Endothelial cell of umbilical vein (primary cell): ENCODE measurements at regions of chr12 and their contacts with region 1.

Region 1: DNA sequence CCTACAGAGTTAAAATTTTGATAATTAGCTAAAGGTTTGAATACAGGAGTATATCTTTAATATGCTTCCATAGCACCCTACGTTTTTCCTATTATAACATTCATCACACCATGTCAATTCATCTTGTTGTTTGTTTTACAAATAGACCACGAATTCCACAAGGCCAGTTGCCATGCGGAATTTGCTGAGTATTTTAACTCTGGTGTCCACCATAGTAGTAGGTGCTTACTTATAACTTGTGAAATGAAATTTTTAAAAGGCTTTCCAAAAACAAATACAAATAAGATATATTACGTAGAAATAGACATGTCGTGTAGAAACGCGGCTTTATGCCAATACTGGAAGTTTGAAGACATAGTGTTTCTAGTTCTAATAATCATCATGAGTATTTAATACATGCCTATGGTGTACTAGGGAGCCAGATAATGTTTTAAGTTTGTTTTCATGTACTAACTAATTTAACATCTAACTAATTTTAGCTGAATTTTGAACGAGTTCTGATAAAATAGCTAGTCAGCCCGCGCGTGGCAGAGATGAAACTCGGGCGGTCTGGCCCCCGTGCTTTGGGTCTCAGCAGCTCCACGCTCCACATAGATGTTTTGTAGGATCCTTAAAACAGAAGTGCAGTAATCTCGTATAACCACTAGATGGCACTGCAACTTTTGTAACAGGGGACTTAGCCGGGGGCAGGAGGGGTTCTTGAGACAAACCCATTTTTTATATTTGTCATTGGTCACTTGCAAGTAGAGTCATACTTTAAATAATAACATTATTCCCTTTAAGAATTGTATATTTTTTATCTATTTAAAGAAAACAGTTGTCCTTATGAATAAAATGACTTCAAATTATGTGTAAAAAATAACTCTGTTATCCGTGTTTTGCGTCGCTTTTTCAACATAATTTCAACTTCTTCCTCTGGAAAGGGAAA is 10.2 kb downstream of the CD69 start:
- DNase-seq: peak; percentile 82
- H3K4me3 ChIP-seq: peak overlapping the region in 1 of 3 experiments; percentile 39
- H3K27ac ChIP-seq: peak overlapping the region; percentile 35
- H3K4me1 ChIP-seq: peaks cover 18% of the 10 kb centered on the region
- H3K27me3 ChIP-seq: no peaks in the 10 kb centered on the region
- CTCF ChIP-seq: peak; percentile 72 to 73
- POLR2A ChIP-seq: no peak

Region 2: GRCh38 chr12:9149372-9149771 is 601.2 kb before region 1 on chr12:
- CTCF ChIA-PET with region 1: no interaction called
- POLR2A ChIA-PET with region 1: no interaction called
- dilution Hi-C with region 1: no loop called
- intact Hi-C with region 1: no loop called
- DNase-seq: no peak
- H3K4me3 ChIP-seq: no peak overlapping the region
- H3K27ac ChIP-seq: no peak overlapping the region
- H3K4me1 ChIP-seq: peaks cover 7% of the 10 kb centered on the region
- H3K27me3 ChIP-seq: peaks cover 0 to 6% of the 10 kb centered on the region in 2 experiments
- CTCF ChIP-seq: no peak
- POLR2A ChIP-seq: no peak

Region 3: GRCh38 chr12:9634177-9634803 is 116.2 kb before region 1 on chr12:
- CTCF ChIA-PET with region 1: interaction called, 24 read pairs
- POLR2A ChIA-PET with region 1: no interaction called
- dilution Hi-C with region 1: no loop called
- intact Hi-C with region 1: no loop called
- DNase-seq: peak; percentile 70
- H3K4me3 ChIP-seq: no peak overlapping the region
- H3K27ac ChIP-seq: no peak overlapping the region
- H3K4me1 ChIP-seq: no peaks in the 10 kb centered on the region
- H3K27me3 ChIP-seq: no peaks in the 10 kb centered on the region
- CTCF ChIP-seq: peak; percentile 55 to 57
- POLR2A ChIP-seq: no peak

Region 4: GRCh38 chr12:9797722-9798619 is 47.4 kb after region 1 on chr12:
- CTCF ChIA-PET with region 1: interaction called, 332 read pairs
- POLR2A ChIA-PET with region 1: no interaction called
- dilution Hi-C with region 1: no loop called
- intact Hi-C with region 1: loop called (anchors 1 kb)
- DNase-seq: peak; percentile 87
- H3K4me3 ChIP-seq: no peak overlapping the region
- H3K27ac ChIP-seq: peak overlapping the region; percentile 1
- H3K4me1 ChIP-seq: peaks cover 39% of the 10 kb centered on the region
- H3K27me3 ChIP-seq: no peaks in the 10 kb centered on the region
- CTCF ChIP-seq: peak; percentile 54 to 67
- POLR2A ChIP-seq: no peak

Region 5: GRCh38 chr12:9925708-9926393 is 175.3 kb after region 1 on chr12:
- CTCF ChIA-PET with region 1: interaction called, 75 read pairs
- POLR2A ChIA-PET with region 1: no interaction called
- dilution Hi-C with region 1: no loop called
- intact Hi-C with region 1: loop called (anchors 1 kb)
- DNase-seq: peak; percentile 60
- H3K4me3 ChIP-seq: no peak overlapping the region
- H3K27ac ChIP-seq: no peak overlapping the region
- H3K4me1 ChIP-seq: no peaks in the 10 kb centered on the region
- H3K27me3 ChIP-seq: peaks cover 0 to 2% of the 10 kb centered on the region in 2 experiments
- CTCF ChIP-seq: peak; percentile 31 to 39
- POLR2A ChIP-seq: no peak

Region 6: GRCh38 chr12:10016881-10017280 is 266.3 kb after region 1 on chr12:
- CTCF ChIA-PET with region 1: interaction called, 54 read pairs
- POLR2A ChIA-PET with region 1: no interaction called
- dilution Hi-C with region 1: no loop called
- intact Hi-C with region 1: loop called (anchors 5 kb)
- DNase-seq: peak; percentile 86
- H3K4me3 ChIP-seq: no peak overlapping the region
- H3K27ac ChIP-seq: peak overlapping the region; percentile 99
- H3K4me1 ChIP-seq: peaks cover 27% of the 10 kb centered on the region
- H3K27me3 ChIP-seq: no peaks in the 10 kb centered on the region
- CTCF ChIP-seq: no peak
- POLR2A ChIP-seq: no peak

Region 7: GRCh38 chr12:10140001-10140400 is 389.5 kb after region 1 on chr12:
- CTCF ChIA-PET with region 1: interaction called, 88 read pairs
- POLR2A ChIA-PET with region 1: no interaction called
- dilution Hi-C with region 1: no loop called
- intact Hi-C with region 1: loop called (anchors 1 kb)
- DNase-seq: peak; percentile 84
- H3K4me3 ChIP-seq: no peak overlapping the region
- H3K27ac ChIP-seq: no peak overlapping the region
- H3K4me1 ChIP-seq: no peaks in the 10 kb centered on the region
- H3K27me3 ChIP-seq: no peaks in the 10 kb centered on the region
- CTCF ChIP-seq: peak; percentile 39 to 40
- POLR2A ChIP-seq: no peak